Lower lobe of right lung (tissue), 2 donors: ENCODE measurements at regions of chr2 and their contacts with region 1.

Region 1: DNA sequence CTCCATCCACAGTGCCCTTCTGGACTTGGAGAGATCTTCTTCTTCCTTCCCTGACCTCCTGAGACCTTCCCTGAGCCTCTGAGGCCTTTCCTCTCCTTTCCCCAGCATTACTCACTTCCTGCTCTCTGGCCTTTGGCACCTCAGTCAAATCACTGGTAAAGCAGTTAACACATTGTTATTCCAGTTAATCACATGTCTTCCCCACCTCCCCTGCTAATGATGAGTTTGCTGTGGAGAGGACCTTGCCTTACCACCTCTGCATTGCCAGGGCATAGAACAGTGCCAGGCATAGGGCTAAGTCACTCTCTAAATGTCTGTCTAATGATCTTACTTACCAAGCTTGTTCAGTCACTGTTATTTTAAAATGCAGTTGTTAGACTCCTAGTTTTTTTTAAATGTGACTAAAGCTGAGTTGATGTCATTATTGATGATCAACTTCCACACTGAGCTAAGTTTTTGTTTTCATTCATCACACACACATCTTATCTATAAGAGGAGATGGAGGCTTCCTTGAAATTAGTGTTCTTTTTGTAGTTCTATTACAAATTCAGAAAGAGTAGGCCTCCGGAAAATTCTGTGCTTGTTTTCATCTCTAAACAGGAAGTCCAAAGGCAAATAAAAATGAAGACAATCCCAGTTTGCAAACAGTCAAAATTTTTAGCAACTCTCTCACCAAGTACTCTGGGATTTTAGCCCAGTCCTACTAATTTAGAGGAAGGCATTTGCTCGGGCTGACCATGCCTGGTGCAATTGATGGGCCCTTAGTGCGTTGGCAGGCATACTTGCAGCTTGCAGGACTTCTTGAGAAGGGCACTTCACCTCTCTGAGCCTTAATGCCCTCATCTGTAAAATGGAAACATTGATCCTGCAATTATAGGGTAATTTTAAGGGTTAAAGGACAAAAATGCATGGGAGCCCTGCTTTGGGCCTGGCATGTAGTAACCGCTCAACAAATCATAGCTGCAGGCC is 113.7 kb upstream of the SPRED2 start:
- DNase-seq: no peak
- ATAC-seq: no peak
- H3K4me3 ChIP-seq: no peak overlapping the region
- H3K27ac ChIP-seq: no peak overlapping the region
- H3K4me1 ChIP-seq: no peaks in the 10 kb centered on the region
- H3K27me3 ChIP-seq: no peaks in the 10 kb centered on the region
- CTCF ChIP-seq: no peak

Region 2: GRCh38 chr2:65264821-65265670 is 281.1 kb before region 1 on chr2:
- intact Hi-C with region 1: loop called (anchors 10 kb)
- DNase-seq: no peak
- ATAC-seq: peak; percentile 88 to 89
- H3K4me3 ChIP-seq: no peak overlapping the region
- H3K27ac ChIP-seq: no peak overlapping the region
- H3K4me1 ChIP-seq: peaks cover 17% of the 10 kb centered on the region
- H3K27me3 ChIP-seq: no peaks in the 10 kb centered on the region
- CTCF ChIP-seq: peak; percentile 63